BJ (cell line): ENCODE measurements at regions of chr21 and their contacts with region 1.

Region 1: DNA sequence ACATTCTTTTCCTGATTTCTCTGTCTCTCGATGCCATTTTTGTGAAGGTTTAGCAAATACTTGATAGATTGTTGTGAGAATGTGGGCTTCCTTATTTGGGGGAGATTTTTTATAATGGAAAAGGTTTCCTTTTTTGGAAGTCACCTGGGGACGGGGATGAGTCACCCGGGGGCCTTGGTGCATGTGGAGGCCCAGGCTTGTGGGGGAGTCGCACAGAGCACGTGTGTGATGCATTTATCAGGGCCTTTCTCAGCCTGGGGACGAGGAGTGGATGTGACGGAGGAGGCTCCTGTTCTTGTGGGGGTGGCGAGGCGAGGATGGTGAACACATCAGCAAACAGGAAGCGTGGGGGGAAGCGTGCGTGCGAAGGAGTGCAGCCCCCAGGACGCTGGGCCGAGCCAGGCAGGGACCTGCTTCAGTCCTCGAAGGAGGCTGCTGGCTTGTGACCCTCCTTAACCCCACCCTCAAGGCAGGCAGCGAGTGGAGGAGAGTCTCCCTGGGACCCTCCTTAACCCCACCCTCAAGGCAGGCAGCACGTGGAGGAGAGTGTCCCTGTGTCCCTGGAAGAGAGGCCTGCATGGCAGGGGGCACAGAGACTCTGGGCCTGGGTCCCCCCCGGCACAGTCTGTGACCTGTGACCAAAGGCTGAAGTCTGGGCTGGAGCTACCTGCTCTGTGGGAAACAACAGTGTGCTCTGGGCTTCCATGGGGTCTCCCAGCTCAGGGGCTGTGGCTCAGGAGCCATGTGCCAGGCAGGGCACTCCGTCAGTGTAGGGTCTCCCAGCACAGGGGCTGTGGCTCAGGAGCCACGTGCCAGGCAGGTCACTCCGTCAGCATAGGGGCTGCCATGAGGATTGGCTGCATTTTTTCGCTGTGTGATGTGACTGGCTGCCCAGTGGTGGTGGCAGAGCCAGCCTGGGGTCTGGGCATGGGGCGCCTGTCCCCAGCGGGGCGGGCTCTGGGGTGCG is 57.2 kb downstream of the AGPAT3 start:
- DNase-seq: no peak
- H3K4me3 ChIP-seq: no peak overlapping the region
- H3K27me3 ChIP-seq: no peaks in the 10 kb centered on the region
- CTCF ChIP-seq: no peak

Region 2: DNA sequence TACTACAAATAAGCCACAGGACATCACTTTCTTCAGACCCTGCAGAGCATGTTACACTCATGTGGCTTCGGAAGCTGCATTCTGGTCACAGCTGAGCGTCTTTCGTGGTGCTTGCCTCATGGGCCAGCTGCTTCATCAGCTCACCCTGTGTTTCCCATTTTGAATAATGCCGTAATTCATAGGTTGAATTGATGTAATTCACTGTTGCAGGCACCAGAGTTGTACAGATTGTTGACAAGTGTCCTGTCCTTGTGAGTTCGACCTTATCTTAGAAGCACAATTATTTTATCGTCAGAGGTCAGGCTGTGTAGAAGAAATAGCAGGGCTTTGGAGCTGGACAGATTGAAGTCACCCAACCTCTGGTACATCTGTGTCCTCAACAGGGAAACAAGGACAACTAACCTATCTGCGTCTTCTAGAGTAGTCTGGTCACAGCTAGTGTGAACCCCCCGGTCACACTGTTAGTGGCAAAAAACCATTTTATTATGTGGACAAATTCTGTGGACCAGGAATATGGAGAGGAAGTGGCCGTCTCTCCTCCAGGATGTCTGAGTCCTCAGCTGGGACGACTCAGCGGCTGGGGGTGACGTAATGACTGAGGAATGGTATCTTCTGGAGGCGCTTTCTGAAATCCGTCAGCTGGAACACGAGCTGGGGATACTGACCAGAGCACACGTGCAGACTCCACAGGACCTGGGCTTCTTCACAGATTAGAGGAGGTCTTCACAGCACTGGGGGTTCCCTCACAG is 930.1 kb before region 1 on chr21:
- CTCF ChIA-PET with region 1: no interaction called
- POLR2A ChIA-PET with region 1: no interaction called
- DNase-seq: peak; percentile 67
- H3K4me3 ChIP-seq: no peak overlapping the region
- H3K27me3 ChIP-seq: no peaks in the 10 kb centered on the region
- CTCF ChIP-seq: no peak

Region 3: GRCh38 chr21:43884012-43884860 is 38.0 kb before region 1 on chr21:
- CTCF ChIA-PET with region 1: no interaction called
- POLR2A ChIA-PET with region 1: no interaction called
- DNase-seq: no peak
- H3K4me3 ChIP-seq: no peak overlapping the region
- H3K27me3 ChIP-seq: no peaks in the 10 kb centered on the region
- CTCF ChIP-seq: no peak

Region 4: DNA sequence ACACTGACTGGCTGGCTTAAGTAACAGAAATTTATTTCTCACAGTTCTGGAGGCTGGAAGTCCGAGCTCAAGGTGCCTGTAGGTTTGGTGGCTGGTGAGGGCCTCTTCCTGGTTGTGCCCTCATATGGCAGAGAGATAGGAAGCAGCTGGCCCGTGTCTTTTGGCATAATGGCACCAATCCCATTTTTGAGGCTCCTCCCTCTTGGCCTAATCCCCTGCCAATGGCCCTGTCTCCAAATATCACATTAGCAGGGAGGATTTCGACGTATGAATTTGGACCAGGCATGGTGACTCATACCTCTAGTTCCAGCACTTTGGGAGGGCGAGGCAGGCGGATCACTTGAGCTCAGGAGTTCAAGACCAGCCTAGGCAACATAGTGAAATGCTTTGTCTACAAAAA is 19.8 kb before region 1 on chr21:
- CTCF ChIA-PET with region 1: interaction called, 4 read pairs
- POLR2A ChIA-PET with region 1: interaction called, 13 read pairs
- DNase-seq: no peak
- H3K4me3 ChIP-seq: no peak overlapping the region
- H3K27me3 ChIP-seq: no peaks in the 10 kb centered on the region
- CTCF ChIP-seq: no peak